Tibial artery (tissue), 4 donors: ENCODE measurements at regions of chr1 and their contacts with region 1.

Region 1: DNA sequence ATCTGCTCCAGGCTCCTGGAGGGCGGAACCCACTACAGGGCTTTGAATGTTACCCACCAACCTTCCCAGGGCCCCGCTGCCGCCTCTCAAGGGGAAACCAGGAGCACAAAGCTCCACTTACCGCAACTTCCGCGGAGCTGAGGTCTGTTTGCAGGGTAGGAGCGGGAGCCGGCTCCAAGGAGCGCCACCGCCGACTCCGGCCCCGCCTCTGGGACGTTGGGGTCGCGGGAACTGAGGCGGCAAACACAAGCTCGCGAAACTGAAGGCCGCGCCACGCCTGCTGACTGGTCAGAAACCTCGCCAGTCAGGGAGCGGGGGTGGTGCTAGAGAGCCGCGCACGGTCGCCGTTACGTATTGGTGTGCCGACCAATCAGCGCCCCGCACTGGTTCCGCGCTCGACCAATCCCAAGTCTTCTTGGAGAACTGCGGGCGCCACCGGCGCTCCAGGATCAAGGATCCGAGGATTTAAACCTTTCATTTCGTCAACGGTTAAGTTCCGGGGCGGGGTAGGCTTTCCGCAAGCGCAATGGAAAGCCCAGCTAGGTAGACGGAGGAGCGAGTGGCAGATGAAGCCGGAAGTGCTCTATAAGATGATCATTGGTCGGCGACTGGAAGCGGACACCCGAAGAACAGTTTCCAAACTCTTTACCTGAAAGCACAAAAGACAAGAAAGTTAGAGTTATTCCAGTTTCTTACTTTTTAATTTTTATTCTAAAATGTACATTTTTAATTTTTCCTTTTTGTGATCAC is at the start of gene STIL:
- DNase-seq: peak; percentile 98 to 99
- H3K4me3 ChIP-seq: peak within 1 kb of the TSS; percentile 58 to 68
- H3K27ac ChIP-seq: peak within 1 kb of the TSS; percentile 74 to 81
- H3K4me1 ChIP-seq: peaks cover 0 to 13% (median 4%) of the 10 kb centered on the region in 4 donors
- H3K27me3 ChIP-seq: no peaks in the 10 kb centered on the region
- CTCF ChIP-seq: no peak

Region 2: DNA sequence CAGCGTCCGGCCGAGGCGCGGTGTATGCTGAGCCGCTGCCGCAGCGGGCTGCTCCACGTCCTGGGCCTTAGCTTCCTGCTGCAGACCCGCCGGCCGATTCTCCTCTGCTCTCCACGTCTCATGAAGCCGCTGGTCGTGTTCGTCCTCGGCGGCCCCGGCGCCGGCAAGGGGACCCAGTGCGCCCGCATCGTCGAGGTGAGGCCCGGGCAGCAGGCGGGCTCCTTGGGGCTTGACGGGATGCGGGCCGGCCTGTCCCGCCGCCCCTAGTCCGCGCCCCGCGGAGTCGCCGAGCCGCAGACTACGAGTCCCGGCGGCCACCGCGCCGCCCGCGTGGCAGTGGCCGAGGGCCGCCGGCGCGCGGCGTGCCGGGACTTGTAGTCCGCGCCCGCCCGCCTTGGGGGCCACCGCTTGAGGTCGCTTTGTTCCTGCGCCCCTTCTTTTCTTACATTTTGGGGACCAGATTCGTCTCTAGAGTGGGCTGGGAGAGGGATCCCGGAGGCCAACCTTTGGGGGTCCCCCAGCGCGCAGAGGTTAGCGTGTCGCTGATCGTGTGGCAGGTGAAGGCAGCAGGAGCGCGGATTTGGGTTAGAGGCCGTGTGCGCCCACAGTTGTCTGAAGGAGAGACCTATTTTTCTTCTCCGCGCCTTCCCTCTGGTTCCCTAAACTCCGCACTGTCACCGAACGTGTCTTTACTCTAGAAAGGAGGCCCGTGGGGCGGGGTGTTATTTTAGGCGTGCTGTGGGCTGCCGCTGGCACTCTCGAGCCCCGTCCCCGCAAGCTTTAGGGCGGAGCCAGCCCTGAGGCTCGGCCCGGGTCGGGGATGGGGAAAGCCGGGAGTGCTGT is 20.1 kb after region 1 on chr1:
- intact Hi-C with region 1: loop called (anchors 1 kb)
- DNase-seq: peak; percentile 75 to 87
- H3K4me3 ChIP-seq: peak overlapping the region; percentile 63 to 95
- H3K27ac ChIP-seq: peak overlapping the region; percentile 88 to 98
- H3K4me1 ChIP-seq: peaks cover 0 to 52% (median 24%) of the 10 kb centered on the region in 4 donors
- H3K27me3 ChIP-seq: no peaks in the 10 kb centered on the region
- CTCF ChIP-seq: peak in 1 of 2 experiments; percentile 23

Region 3: GRCh38 chr1:47351305-47351704 is 37.2 kb after region 1 on chr1:
- intact Hi-C with region 1: no loop called
- DNase-seq: no peak
- H3K4me3 ChIP-seq: no peak overlapping the region
- H3K27ac ChIP-seq: no peak overlapping the region
- H3K4me1 ChIP-seq: peaks cover 0 to 6% (median 2%) of the 10 kb centered on the region in 4 donors
- H3K27me3 ChIP-seq: no peaks in the 10 kb centered on the region
- CTCF ChIP-seq: no peak